Right lobe of liver (tissue), 6 donors: ENCODE measurements at regions of chr4 and their contacts with region 1.

Region 1: GRCh38 chr4:184168406-184169019 is 49.2 kb downstream of the ENPP6 start:
- DNase-seq: peak; percentile 80 to 85 (median 82)
- ATAC-seq: peak; percentile 97 to 99 (median 98)
- H3K4me3 ChIP-seq: no peak overlapping the region
- H3K27ac ChIP-seq: no peak overlapping the region
- H3K4me1 ChIP-seq: peaks cover 0 to 7% (median 0%) of the 10 kb centered on the region in 4 donors
- H3K27me3 ChIP-seq: no peaks in the 10 kb centered on the region
- CTCF ChIP-seq: peak; percentile 88 to 97 (median 93)
- POLR2A ChIP-seq: no peak

Region 2: GRCh38 chr4:183840311-183840710 is 328.2 kb before region 1 on chr4:
- intact Hi-C with region 1: loop called (anchors 5 kb)
- DNase-seq: peak; percentile 63 to 82 (median 82)
- ATAC-seq: peak; percentile 94 to 99 (median 96)
- H3K4me3 ChIP-seq: no peak overlapping the region
- H3K27ac ChIP-seq: no peak overlapping the region
- H3K4me1 ChIP-seq: no peaks in the 10 kb centered on the region
- H3K27me3 ChIP-seq: no peaks in the 10 kb centered on the region
- CTCF ChIP-seq: peak; percentile 83 to 91 (median 86)
- POLR2A ChIP-seq: no peak

Region 3: DNA sequence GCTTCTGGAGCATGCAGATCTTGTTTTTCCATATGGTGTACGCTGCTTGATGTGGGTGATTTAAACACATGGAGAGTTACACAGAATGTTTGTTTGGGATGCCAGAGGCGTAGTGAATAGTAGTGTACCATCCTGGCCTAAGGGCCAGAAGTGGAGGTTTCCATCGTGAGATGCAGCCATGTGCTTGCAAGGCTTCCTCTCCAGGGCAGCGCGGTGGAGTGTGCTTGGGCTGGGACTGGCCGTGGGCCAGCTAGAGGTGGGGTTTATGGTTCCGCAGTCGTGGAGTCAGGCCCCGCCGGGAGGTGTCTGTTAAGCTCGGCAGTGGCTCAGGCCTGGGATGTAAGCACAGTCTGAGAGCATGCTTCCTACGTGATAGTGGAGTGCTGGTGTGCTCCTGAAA is 249.4 kb before region 1 on chr4:
- intact Hi-C with region 1: no loop called
- DNase-seq: no peak
- ATAC-seq: peak in 1 of 4 donors; percentile 50
- H3K4me3 ChIP-seq: no peak overlapping the region
- H3K27ac ChIP-seq: no peak overlapping the region
- H3K4me1 ChIP-seq: no peaks in the 10 kb centered on the region
- H3K27me3 ChIP-seq: no peaks in the 10 kb centered on the region
- CTCF ChIP-seq: no peak
- POLR2A ChIP-seq: no peak

Region 4: DNA sequence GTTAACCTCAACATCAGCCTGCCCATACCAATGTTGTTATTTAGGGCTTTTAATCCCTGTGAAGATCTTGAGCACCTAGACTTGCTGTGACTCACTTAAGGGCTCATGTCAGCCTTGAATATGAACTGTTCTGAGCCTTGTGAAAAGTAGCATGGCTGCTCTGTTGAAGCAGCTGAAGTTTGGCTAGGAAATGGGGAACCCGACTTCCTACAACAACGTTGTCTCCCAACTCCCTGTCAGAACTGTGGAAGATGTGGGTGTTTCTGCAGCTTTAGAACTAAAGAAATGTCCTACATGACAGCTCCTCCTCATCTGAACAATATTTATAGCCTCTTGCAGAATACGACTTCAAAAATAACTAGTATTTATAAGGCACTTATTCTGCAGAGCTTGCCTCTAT is 235.9 kb before region 1 on chr4:
- intact Hi-C with region 1: no loop called
- DNase-seq: no peak
- ATAC-seq: no peak
- H3K4me3 ChIP-seq: no peak overlapping the region
- H3K27ac ChIP-seq: no peak overlapping the region
- H3K4me1 ChIP-seq: peaks cover 0 to 14% (median 2%) of the 10 kb centered on the region in 4 donors
- H3K27me3 ChIP-seq: no peaks in the 10 kb centered on the region
- CTCF ChIP-seq: no peak
- POLR2A ChIP-seq: no peak

Region 5: GRCh38 chr4:184250795-184251669 is 82.5 kb after region 1 on chr4:
- intact Hi-C with region 1: loop called in 1 of 2 experiments (anchors 10 kb)
- DNase-seq: no peak
- ATAC-seq: peak; percentile 81 to 90 (median 90)
- H3K4me3 ChIP-seq: no peak overlapping the region
- H3K27ac ChIP-seq: no peak overlapping the region
- H3K4me1 ChIP-seq: no peaks in the 10 kb centered on the region
- H3K27me3 ChIP-seq: no peaks in the 10 kb centered on the region
- CTCF ChIP-seq: peak; percentile 52 to 71 (median 56)
- POLR2A ChIP-seq: no peak